ENCODE measurements at regions of chr10 and their contacts with region 1.

Region 1: GRCh38 chr10:49518982-49519578 is 19.8 kb downstream of the ERCC6 start:
- DNase-seq: peak; percentile 33
- H3K4me3 ChIP-seq: no peak overlapping the region
- H3K27ac ChIP-seq: no peak overlapping the region
- H3K4me1 ChIP-seq: no peaks in the 10 kb centered on the region
- H3K27me3 ChIP-seq: no peaks in the 10 kb centered on the region
- CTCF ChIP-seq: peak; percentile 27 to 76 (median 63)
- POLR2A ChIP-seq: no peak

Region 2: DNA sequence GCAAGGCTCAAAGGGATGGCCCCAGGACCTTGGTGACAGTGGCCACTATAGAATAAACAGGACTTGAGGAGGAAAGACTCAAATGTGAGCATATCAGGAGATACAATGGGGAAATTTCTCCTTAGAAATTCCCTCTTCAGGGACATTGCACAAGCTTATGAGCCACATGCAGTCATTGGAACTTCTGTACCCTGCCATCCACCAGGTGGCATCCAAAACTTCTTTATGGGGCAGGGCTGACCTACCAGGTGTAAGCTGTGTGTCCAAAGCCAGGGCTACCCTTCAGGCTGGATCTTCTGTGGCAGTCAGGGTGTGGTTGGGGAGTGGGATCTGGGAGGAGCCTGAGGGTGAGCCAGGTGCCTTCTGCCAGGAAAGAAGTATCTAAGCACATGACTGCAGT is 542.9 kb before region 1 on chr10:
- intact Hi-C with region 1: loop called (anchors 5 kb)
- DNase-seq: peak; percentile 14
- H3K4me3 ChIP-seq: no peak overlapping the region
- H3K27ac ChIP-seq: no peak overlapping the region
- H3K4me1 ChIP-seq: no peaks in the 10 kb centered on the region
- H3K27me3 ChIP-seq: no peaks in the 10 kb centered on the region
- CTCF ChIP-seq: peak in 2 of 4 experiments; percentile 21 to 24
- POLR2A ChIP-seq: no peak

Region 3: DNA sequence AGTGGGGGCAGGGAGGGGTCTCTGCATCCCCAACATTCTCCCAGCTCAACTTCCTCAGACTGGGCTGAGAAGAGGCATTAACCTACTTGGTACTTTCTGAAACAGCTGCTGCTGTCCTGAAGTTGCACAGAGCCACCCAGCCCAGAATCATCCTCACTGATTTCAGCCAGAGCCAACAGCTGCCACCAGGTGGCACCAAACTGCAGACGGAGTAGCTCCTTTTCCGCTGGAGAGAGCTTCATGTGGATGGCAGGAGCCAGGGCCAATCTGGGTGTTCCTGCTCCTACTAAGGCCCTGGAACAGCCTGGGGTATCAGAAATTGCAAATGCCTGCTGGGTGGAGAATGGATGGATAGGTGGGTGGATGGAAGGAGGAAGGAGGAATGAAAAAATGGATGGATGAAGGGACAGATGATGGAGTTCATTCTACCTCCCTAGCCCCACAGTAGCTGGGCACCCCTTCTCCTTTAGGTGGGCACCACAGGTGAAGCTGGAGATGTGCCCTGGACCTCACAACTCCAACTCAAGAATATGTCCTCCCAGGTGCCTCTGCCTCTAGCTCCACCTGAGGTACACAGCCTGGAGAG is 111.4 kb before region 1 on chr10:
- intact Hi-C with region 1: loop called (anchors 10 kb)
- DNase-seq: peak; percentile 82
- H3K4me3 ChIP-seq: no peak overlapping the region
- H3K27ac ChIP-seq: no peak overlapping the region
- H3K4me1 ChIP-seq: peaks cover 5% of the 10 kb centered on the region
- H3K27me3 ChIP-seq: peaks cover 11% of the 10 kb centered on the region
- CTCF ChIP-seq: peak; percentile 86 to 89 (median 88)
- POLR2A ChIP-seq: no peak

Region 4: GRCh38 chr10:49457686-49458085 is 61.4 kb before region 1 on chr10:
- intact Hi-C with region 1: no loop called
- DNase-seq: no peak
- H3K4me3 ChIP-seq: no peak overlapping the region
- H3K27ac ChIP-seq: no peak overlapping the region
- H3K4me1 ChIP-seq: no peaks in the 10 kb centered on the region
- H3K27me3 ChIP-seq: no peaks in the 10 kb centered on the region
- CTCF ChIP-seq: no peak
- POLR2A ChIP-seq: no peak

Measured in prostate gland (tissue), 2 donors.